ENCODE measurements at regions of chr10 and their contacts with region 1.

Region 1: DNA sequence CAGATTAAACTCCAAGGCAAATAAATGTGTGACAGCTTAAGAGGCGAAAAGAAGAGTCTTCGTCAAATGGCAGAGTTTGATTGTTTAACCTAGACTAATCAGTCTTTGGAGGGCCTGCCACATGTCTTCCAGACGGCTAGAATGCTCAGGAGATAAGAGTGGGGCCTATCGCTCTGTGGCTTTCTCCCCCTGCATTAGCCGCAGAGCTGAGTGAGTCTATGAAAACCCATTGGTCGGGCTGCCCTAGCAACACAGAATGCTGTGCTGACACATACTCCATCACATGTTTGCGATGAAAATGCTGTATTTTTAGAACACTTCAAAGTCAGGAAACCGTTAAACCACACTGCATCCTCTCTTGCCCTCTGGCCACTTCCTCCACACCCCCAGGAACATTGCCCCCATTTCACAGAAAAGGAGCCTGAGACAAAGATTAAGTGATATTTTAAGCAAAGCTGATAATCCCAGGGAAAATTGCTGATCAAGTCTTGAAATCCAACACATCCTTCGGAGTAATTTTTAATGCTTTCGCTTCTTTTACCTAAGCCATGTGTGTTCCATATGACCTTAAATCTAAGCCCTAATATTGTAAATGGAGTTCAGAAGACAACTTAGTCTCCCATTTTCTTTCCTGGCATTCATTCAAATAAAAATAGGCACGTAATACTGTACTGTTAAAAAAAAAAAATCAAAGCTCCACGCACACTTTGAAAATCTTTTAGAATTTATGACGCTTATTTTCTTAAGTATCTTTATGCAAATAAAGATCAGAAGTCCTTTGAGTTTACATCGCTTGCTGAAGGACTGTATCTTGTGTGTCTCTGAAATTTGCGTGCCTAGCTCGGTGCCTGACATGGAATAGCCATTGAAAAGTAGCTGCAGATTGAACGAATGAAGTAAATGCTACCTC is 161.2 kb downstream of the CELF2 start:
- DNase-seq: peak; percentile 90
- ATAC-seq: peak; percentile 72
- H3K4me3 Mint-ChIP-seq: no peak overlapping the region
- H3K27ac Mint-ChIP-seq: no peak overlapping the region
- H3K4me1 Mint-ChIP-seq: peaks cover 94% of the 10 kb centered on the region
- H3K27me3 Mint-ChIP-seq: no peaks in the 10 kb centered on the region

Region 2: DNA sequence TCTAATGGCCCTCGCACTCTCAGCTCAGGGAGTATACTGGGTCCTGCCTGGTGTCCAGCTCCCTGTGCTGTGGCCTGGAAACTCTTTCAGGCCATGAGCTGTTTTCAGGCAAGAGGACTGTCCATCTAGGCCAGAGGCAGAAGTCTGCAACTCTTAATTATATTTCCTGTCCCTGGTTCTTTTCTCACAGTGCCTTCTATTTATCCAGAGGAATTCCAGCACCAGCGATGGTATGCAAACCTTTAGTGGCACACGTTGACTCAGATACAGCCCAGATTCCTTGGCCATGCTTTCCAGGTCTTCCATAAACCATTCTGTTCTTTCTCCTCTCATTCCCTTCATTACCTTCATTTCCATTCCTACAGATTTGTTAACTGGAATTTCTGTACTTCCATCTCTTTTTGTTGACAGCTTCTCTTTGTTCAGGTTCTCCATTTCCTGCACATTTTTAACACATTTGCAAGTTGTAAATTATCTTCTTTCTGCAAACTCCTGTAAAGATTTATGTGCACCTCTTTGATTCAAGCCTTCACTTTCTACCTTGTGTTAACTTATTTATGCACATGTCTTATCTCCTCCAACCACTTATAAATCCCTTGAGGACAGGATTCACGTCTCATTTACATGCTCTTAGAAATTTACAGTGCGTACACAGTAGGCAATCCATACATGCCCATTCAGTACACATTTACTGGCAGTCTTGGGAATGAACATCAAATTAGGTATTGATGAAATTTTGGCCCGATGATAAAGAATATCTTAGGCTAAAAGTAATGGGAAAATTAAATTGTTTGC is 10.9 kb after region 1 on chr10:
- CTCF ChIA-PET with region 1: interaction called, 3 read pairs
- POLR2A ChIA-PET with region 1: no interaction called
- intact Hi-C with region 1: loop called in 1 of 2 experiments (anchors 1 kb)
- DNase-seq: no peak
- ATAC-seq: no peak
- H3K4me3 Mint-ChIP-seq: no peak overlapping the region
- H3K27ac Mint-ChIP-seq: peak overlapping the region; percentile 89
- H3K4me1 Mint-ChIP-seq: peaks cover 96% of the 10 kb centered on the region
- H3K27me3 Mint-ChIP-seq: no peaks in the 10 kb centered on the region

Region 3: DNA sequence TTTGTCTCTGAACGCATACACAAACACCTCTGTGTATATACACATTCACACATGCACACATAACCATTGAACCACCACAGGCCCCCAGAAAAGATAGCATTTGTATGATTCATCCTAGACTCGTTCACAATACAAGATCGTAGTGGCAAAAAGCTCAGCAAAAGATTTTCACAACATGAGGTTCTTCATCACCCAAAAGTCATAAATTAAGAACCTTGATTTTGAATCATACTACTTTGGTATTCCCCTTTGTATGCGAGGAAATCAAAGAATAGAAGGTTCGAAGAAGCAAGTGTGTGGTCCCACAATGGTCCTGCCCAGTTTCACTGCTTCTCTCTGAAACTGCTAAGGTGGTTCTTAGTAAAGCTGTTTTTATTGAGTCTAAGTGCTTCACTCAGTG is 39.5 kb after region 1 on chr10:
- CTCF ChIA-PET with region 1: interaction called, 3 read pairs
- POLR2A ChIA-PET with region 1: interaction called, 5 read pairs
- intact Hi-C with region 1: loop called in 1 of 2 experiments (anchors 1 kb)
- DNase-seq: peak; percentile 64
- ATAC-seq: peak; percentile 92
- H3K4me3 Mint-ChIP-seq: peak overlapping the region; percentile 18
- H3K27ac Mint-ChIP-seq: peak overlapping the region; percentile 85
- H3K4me1 Mint-ChIP-seq: peaks cover 94% of the 10 kb centered on the region
- H3K27me3 Mint-ChIP-seq: no peaks in the 10 kb centered on the region

Region 4: DNA sequence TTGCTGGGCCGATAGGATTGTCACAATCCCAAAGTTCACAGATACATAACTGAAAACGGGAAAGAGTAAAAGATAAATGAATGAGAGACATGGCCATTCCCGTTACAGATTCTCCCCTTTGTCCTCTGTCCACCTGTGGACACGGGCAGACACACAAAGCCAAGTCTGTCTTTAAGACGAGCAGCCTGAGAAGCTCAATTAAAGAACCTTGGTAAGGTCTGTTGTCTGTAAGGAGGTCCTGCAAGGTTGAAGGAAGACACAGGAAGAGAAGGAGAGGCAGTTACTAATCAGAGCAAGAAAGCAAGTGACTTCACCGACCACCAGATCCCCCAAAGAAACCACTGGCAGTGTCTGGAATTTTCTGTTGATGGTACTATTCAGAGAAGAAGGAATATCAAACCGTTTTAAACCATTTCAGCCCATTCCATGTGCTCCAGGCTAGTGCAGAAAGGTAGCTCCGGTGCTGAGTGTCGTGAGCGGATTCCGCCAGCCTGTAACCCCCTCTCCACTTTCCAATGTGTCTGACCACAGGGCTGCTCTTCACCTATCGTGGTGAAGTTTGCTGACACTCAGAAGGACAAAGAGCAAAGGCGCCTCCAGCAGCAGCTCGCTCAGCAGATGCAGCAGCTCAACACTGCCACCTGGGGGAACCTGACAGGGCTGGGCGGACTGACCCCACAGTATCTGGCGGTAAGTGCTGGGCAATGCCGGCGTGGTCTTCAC is 91.4 kb after region 1 on chr10:
- CTCF ChIA-PET with region 1: interaction called, 5 read pairs
- POLR2A ChIA-PET with region 1: interaction called, 4 read pairs
- intact Hi-C with region 1: loop called in 1 of 2 experiments (anchors 2 kb)
- DNase-seq: peak; percentile 88
- ATAC-seq: peak; percentile 60
- H3K4me3 Mint-ChIP-seq: peak overlapping the region; percentile 27
- H3K27ac Mint-ChIP-seq: peak overlapping the region; percentile 81
- H3K4me1 Mint-ChIP-seq: peaks cover 90% of the 10 kb centered on the region
- H3K27me3 Mint-ChIP-seq: no peaks in the 10 kb centered on the region

Region 5: GRCh38 chr10:12780634-12781601 is 1602.1 kb after region 1 on chr10:
- CTCF ChIA-PET with region 1: no interaction called
- POLR2A ChIA-PET with region 1: no interaction called
- intact Hi-C with region 1: no loop called
- DNase-seq: peak; percentile 61
- ATAC-seq: peak; percentile 72
- H3K4me3 Mint-ChIP-seq: no peak overlapping the region
- H3K27ac Mint-ChIP-seq: peak overlapping the region; percentile 78
- H3K4me1 Mint-ChIP-seq: peaks cover 42% of the 10 kb centered on the region
- H3K27me3 Mint-ChIP-seq: no peaks in the 10 kb centered on the region